Dendritic cell treated with granulocyte-macrophage colony-stimulating factor and Interleukin-4, amounts not matched to agents 40 ng/mL and 50 ng/mL, for 4 days (primary cell): ENCODE measurements at regions of chr10 and their contacts with region 1.

Region 1: DNA sequence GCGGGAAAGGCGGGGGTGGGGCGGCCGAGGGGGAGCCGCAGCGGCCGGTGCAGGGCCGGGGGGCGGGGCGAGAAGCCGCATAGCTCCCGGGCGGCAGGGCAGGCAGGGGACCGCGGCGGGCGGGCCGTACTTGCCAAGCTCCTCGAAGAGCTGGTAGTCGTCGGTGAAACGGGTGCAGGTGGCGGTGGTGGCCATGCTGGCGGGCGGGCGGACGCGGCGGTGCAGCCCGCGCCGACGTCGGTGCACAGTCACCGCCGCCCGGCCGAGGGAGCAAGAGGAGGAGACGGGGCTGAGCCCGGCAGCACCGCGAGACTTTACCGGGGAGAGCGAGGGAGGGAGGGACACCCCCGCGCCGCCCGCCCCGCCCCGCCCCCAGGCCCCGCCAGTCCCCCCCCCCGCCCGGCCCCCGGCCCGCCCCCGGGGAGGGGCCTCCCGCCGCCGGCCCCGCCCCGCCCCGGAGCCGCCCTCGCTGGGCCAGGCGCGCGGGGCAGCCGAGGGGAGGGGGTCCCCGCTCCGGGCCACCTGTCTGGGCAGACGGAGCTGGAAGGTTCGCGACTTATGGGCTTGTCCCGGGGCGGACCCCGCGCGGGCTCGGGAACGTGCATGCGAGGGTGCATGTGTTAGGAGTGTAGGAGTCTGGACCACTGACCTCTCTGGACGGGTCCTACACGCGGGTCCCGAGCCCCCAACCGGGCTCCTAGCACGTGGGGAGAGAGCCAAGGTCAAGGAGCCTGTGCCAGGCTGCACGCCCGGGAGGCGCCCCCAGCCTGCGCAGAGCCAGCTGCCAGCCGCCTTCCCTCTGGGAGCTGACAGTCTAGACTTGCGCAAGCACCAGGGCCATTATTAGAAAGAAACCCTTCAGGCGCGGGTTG is at the start of gene CAMK2G:
- H3K4me3 Mint-ChIP-seq: peak within 1 kb of the TSS; percentile 77
- H3K27ac Mint-ChIP-seq: peak within 1 kb of the TSS; percentile 69
- H3K4me1 Mint-ChIP-seq: peaks cover 48% of the 10 kb centered on the region
- H3K27me3 Mint-ChIP-seq: peaks cover 1% of the 10 kb centered on the region

Region 2: GRCh38 chr10:73495884-73496674 is 378.4 kb before region 1 on chr10 and contains the start of gene PPP3CB:
- intact Hi-C with region 1: no loop called
- H3K4me3 Mint-ChIP-seq: peak within 1 kb of the TSS; percentile 96
- H3K27ac Mint-ChIP-seq: peak within 1 kb of the TSS; percentile 100
- H3K4me1 Mint-ChIP-seq: peaks cover 58% of the 10 kb centered on the region
- H3K27me3 Mint-ChIP-seq: no peaks in the 10 kb centered on the region

Region 3: GRCh38 chr10:73785221-73785720 is 89.2 kb before region 1 on chr10 and contains the start of gene ZSWIM8:
- intact Hi-C with region 1: loop called (anchors 2 kb)
- H3K4me3 Mint-ChIP-seq: peak within 1 kb of the TSS; percentile 93
- H3K27ac Mint-ChIP-seq: peak within 1 kb of the TSS; percentile 98
- H3K4me1 Mint-ChIP-seq: peaks cover 45% of the 10 kb centered on the region
- H3K27me3 Mint-ChIP-seq: no peaks in the 10 kb centered on the region